Ovary (tissue), 10 donors: ENCODE measurements at regions of chr9 and their contacts with region 1.

Region 1: GRCh38 chr9:114397848-114398605 is 10.2 kb upstream of the AKNA start:
- DNase-seq: peak; percentile 97 to 99 (median 98)
- H3K4me3 ChIP-seq: peak overlapping the region; percentile 83
- H3K27ac ChIP-seq: peak overlapping the region; percentile 83 to 91
- H3K4me1 ChIP-seq: peaks cover 12% of the 10 kb centered on the region
- H3K27me3 ChIP-seq: no peaks in the 10 kb centered on the region
- CTCF ChIP-seq: peak in 1 of 3 donors; percentile 30
- EP300 ChIP-seq: peak; percentile 79
- POLR2A ChIP-seq: peak; percentile 78

Region 2: GRCh38 chr9:114007991-114008666 is 389.9 kb before region 1 on chr9:
- intact Hi-C with region 1: no loop called
- DNase-seq: peak in 4 of 5 donors; percentile 6 to 28 (median 8)
- H3K4me3 ChIP-seq: no peak overlapping the region
- H3K27ac ChIP-seq: no peak overlapping the region
- H3K4me1 ChIP-seq: peaks cover 2% of the 10 kb centered on the region
- H3K27me3 ChIP-seq: no peaks in the 10 kb centered on the region
- CTCF ChIP-seq: no peak
- EP300 ChIP-seq: no peak
- POLR2A ChIP-seq: no peak

Region 3: GRCh38 chr9:114348906-114349482 is 49.0 kb before region 1 on chr9:
- intact Hi-C with region 1: loop called in 1 of 4 experiments (anchors 5 kb)
- DNase-seq: peak; percentile 66 to 74 (median 71)
- H3K4me3 ChIP-seq: no peak overlapping the region
- H3K27ac ChIP-seq: peak overlapping the region in 1 of 2 donors; percentile 61
- H3K4me1 ChIP-seq: no peaks in the 10 kb centered on the region
- H3K27me3 ChIP-seq: no peaks in the 10 kb centered on the region
- CTCF ChIP-seq: no peak
- EP300 ChIP-seq: no peak
- POLR2A ChIP-seq: no peak

Region 4: GRCh38 chr9:115114546-115114945 is 716.5 kb after region 1 on chr9:
- intact Hi-C with region 1: loop called in 1 of 4 experiments (anchors 5 kb)
- DNase-seq: no peak
- H3K4me3 ChIP-seq: no peak overlapping the region
- H3K27ac ChIP-seq: no peak overlapping the region
- H3K4me1 ChIP-seq: peaks cover 2% of the 10 kb centered on the region
- H3K27me3 ChIP-seq: no peaks in the 10 kb centered on the region
- CTCF ChIP-seq: no peak
- EP300 ChIP-seq: no peak
- POLR2A ChIP-seq: no peak